ENCODE measurements at regions of chr19 and their contacts with region 1.

Region 1: GRCh38 chr19:58228585-58229254 is at the start of gene ZNF544:
- DNase-seq: peak; percentile 79
- H3K4me3 ChIP-seq: peak within 1 kb of the TSS; percentile 77 to 98 (median 85)
- H3K27ac ChIP-seq: peak within 1 kb of the TSS; percentile 50
- H3K4me1 ChIP-seq: peaks cover 16% of the 10 kb centered on the region
- H3K27me3 ChIP-seq: no peaks in the 10 kb centered on the region
- CTCF ChIP-seq: peak in 1 of 2 donors; percentile 14
- total RNA-seq, gene ZNF544: 32.3 to 48.3 TPM

Region 2: GRCh38 chr19:58243351-58243750 is 14.6 kb after region 1 on chr19:
- CTCF ChIA-PET with region 1: no interaction called
- dilution Hi-C with region 1: no loop called
- in situ Hi-C with region 1: no loop called
- intact Hi-C with region 1: no loop called
- DNase-seq: no peak
- H3K4me3 ChIP-seq: no peak overlapping the region
- H3K27ac ChIP-seq: no peak overlapping the region
- H3K4me1 ChIP-seq: no peaks in the 10 kb centered on the region
- H3K27me3 ChIP-seq: no peaks in the 10 kb centered on the region
- CTCF ChIP-seq: no peak

Region 3: DNA sequence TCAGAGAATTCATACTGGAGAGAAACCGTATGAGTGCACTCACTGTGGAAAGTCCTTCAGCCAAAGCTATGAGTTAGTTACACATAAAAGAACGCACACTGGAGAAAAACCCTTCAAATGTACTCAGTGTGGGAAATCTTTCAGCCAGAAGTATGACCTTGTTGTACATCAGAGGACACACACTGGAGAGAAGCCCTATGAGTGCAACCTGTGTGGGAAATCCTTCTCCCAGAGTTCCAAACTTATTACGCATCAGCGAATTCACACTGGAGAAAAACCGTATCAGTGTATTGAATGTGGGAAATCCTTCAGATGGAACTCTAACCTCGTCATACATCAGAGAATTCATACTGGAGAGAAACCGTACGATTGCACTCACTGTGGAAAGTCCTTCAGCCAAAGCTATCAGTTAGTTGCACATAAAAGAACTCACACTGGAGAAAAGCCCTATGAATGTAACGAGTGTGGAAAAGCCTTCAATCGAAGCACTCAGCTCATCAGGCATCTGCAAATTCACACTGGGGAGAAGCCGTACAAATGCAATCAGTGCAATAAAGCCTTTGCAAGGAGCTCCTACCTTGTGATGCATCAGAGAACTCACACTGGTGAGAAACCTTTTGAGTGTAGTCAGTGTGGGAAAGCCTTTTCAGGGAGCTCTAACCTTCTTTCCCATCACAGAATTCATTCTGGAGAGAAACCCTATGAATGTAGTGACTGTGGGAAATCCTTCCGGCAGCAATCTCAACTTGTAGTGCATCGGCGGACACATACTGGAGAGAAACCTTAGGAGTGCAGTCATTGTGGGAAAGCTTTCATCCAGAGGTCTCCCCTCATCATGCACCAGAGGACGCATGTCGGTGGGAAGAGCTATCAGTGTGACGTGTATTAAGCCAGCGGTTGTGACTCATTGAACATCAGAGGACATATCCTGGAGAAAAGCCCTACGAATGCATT is 33.5 kb after region 1 on chr19:
- CTCF ChIA-PET with region 1: no interaction called
- dilution Hi-C with region 1: loop called (anchors 5 kb)
- in situ Hi-C with region 1: no loop called
- intact Hi-C with region 1: no loop called
- DNase-seq: peak; percentile 6
- H3K4me3 ChIP-seq: no peak overlapping the region
- H3K27ac ChIP-seq: no peak overlapping the region
- H3K4me1 ChIP-seq: no peaks in the 10 kb centered on the region
- H3K27me3 ChIP-seq: no peaks in the 10 kb centered on the region
- CTCF ChIP-seq: no peak

Region 4: DNA sequence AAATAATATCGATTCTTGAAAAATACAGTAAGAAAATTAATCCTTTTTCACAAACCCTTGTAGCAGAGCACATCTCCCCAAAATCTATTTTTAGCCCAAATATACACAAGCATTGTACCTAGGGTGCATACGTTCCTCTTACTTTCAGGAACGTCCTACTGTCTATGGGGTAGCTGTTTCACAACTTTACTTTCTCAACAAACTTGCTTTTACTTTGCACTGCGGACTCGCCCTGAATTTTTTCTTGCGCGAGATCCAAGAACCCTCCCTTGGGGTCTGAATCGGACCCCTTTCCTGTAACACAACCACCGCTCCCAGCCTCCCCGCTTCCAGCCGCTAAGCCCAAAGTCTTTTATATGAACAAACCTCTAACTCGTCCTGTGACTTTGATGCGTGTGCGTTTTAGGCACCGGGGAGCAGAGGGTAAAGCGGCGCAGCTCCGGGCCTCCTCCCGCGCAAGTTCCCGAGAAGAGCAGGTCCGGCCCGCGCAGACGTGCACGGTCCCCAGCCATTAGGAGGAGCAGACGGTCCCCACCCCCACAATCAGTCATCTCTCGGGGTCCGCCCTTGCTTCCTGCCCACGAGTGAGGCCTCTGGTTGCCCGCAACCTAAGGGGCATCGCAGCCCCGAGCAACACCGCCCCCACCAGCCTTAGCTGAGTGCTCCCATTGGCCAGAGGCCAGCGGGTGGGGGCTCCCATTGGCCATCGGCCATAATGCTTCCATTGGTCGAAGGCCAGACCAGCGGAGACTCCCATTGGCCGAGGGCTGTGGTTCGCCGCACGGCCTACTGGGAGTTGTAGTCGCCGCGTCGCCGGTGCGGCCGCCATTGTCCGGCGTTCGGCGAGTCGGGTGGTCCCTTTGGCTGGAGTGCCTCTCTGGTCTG is 49.7 kb after region 1 on chr19 and contains the start of gene ZNF8:
- CTCF ChIA-PET with region 1: no interaction called
- dilution Hi-C with region 1: no loop called
- in situ Hi-C with region 1: no loop called
- intact Hi-C with region 1: loop called (anchors 2 kb)
- DNase-seq: peak; percentile 99
- H3K4me3 ChIP-seq: peak within 1 kb of the TSS; percentile 73 to 93 (median 82)
- H3K27ac ChIP-seq: peak within 1 kb of the TSS; percentile 80
- H3K4me1 ChIP-seq: peaks cover 10% of the 10 kb centered on the region
- H3K27me3 ChIP-seq: no peaks in the 10 kb centered on the region
- CTCF ChIP-seq: peak in 1 of 2 donors; percentile 16
- total RNA-seq, gene ZNF8: 6.0 to 10.2 TPM

Region 5: DNA sequence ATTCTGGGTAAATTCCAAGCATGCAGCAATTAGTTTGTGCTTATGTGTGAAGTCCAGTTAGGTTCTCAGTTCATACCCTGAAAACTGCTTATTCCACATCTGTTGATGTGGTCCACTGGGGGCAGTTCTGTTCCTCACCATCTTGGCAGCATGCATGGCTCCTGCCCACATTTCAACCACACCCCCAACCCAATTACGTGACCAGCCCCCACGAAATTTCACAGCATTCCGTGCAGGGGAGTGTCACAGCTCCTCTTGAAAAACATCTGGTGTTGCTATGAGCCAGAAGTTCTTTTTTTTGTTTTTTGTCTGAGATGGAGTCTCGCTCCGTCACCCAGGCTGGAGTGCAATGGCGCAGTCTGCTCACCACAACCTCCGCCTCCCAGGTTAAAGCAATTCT is 67.4 kb after region 1 on chr19:
- CTCF ChIA-PET with region 1: no interaction called
- dilution Hi-C with region 1: loop called (anchors 5 kb)
- in situ Hi-C with region 1: no loop called
- intact Hi-C with region 1: no loop called
- DNase-seq: no peak
- H3K4me3 ChIP-seq: no peak overlapping the region
- H3K27ac ChIP-seq: no peak overlapping the region
- H3K4me1 ChIP-seq: no peaks in the 10 kb centered on the region
- H3K27me3 ChIP-seq: no peaks in the 10 kb centered on the region
- CTCF ChIP-seq: no peak

Region 6: DNA sequence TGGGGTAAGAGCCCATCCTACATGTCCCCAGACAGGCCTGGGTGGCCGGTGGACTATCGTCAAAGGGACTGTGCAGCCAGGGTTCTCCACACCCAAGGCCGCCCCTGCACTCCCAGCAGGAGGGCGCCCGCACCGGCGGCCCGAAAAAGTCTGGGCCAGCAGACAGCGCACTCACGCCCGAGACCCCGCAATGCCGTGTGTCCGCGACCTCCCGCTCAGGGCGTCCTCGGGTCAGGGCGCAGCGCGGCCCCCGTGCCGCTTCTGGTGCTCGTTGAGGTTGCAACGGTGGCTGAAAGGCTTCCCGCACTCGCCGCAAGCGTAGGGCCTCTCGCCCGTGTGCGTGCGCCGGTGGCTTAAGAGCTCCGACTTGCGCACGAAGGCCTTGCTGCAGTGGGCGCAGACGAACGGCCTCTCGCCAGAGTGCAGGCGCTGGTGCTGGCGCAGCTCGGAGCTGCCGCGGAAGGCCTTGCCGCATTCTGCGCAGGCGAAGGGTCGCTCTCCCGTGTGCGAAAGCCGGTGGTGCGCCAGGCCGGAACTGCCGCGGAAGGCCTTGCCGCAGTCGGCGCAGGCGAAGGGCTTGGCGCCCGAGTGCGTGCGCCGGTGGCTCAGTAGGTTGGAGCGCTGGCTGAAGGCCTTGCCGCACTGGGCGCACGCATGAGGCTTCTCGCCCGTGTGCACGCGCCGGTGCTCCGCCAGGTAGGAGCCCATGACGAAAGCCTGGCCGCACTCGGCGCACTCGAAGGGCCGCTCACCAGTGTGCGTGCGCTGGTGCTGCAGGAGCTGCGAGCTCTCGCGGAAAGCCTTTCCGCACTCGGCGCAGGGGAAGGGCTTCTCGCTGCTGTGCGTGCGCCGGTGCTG is 127.4 kb after region 1 on chr19:
- CTCF ChIA-PET with region 1: no interaction called
- dilution Hi-C with region 1: no loop called
- in situ Hi-C with region 1: no loop called
- intact Hi-C with region 1: no loop called
- DNase-seq: peak; percentile 18
- H3K4me3 ChIP-seq: no peak overlapping the region
- H3K27ac ChIP-seq: no peak overlapping the region
- H3K4me1 ChIP-seq: no peaks in the 10 kb centered on the region
- H3K27me3 ChIP-seq: no peaks in the 10 kb centered on the region
- CTCF ChIP-seq: no peak